ENCODE measurements at regions of chr15 and their contacts with region 1.

Region 1: GRCh38 chr15:76034111-76034510 is 21.9 kb upstream of the NRG4 start:
- DNase-seq: no peak
- H3K4me3 ChIP-seq: no peak overlapping the region
- H3K27ac ChIP-seq: no peak overlapping the region
- H3K4me1 ChIP-seq: peaks cover 10% of the 10 kb centered on the region
- H3K27me3 ChIP-seq: no peaks in the 10 kb centered on the region
- CTCF ChIP-seq: no peak

Region 2: DNA sequence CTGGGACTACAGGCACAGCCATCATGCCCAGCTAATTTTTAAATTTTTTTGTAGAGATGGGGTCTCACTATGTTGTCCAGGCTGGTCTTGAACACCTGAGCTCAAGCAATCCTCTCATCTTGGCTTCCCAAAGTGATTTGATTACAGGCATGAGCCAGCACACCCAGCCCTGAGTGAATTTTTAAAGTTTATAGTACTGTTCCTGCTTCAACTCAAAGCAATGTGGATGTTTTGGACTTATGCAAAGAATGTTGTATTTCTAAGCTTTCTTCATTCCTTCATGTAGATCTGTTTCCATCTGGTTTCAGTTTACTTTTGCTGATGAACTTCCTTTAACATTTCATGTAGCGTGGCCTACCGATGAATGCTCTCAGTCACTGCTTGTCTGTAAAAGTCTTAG is 45.1 kb before region 1 on chr15:
- CTCF ChIA-PET with region 1: no interaction called
- dilution Hi-C with region 1: loop called (anchors 5 kb)
- in situ Hi-C with region 1: no loop called
- intact Hi-C with region 1: no loop called
- DNase-seq: no peak
- H3K4me3 ChIP-seq: no peak overlapping the region
- H3K27ac ChIP-seq: no peak overlapping the region
- H3K4me1 ChIP-seq: no peaks in the 10 kb centered on the region
- H3K27me3 ChIP-seq: no peaks in the 10 kb centered on the region
- CTCF ChIP-seq: no peak

Region 3: GRCh38 chr15:76123031-76123430 is 88.9 kb after region 1 on chr15:
- CTCF ChIA-PET with region 1: no interaction called
- dilution Hi-C with region 1: loop called (anchors 5 kb)
- in situ Hi-C with region 1: no loop called
- intact Hi-C with region 1: no loop called
- DNase-seq: no peak
- H3K4me3 ChIP-seq: no peak overlapping the region
- H3K27ac ChIP-seq: no peak overlapping the region
- H3K4me1 ChIP-seq: no peaks in the 10 kb centered on the region
- H3K27me3 ChIP-seq: no peaks in the 10 kb centered on the region
- CTCF ChIP-seq: no peak